PC-9 (cell line): ENCODE measurements at regions of chr12 and their contacts with region 1.

Region 1: DNA sequence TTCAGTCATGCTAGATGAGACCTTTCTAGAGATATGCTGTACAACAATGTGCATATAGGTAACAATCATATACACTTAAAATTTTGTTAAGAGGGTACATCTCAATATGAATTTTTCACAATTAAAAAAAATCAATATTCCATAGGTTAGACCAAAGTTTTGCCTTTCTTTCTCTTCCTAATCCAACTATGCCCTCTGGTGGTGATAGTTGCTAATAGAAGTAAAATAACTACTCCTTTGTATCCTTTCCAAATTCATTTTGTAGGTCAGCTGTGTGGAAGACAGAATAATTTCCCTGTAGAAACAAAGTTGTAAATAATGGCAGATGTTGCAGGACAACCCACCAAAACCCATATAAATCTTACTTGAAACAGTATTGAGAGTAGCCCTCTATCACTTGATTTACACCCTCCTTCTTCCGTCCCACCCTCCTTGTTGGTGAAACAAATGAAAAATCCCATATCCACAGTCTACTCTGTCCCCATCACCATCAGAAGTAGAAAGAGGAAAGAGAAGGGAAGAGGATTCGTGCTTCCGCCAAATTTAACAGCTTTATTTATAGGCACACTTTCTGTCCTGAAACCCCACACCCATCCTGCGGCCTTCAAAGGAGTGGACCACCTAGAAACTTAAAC is 34.2 kb upstream of the KICS2 start:
- DNase-seq: no peak
- H3K4me3 ChIP-seq: no peak overlapping the region
- H3K27ac ChIP-seq: no peak overlapping the region
- H3K4me1 ChIP-seq: no peaks in the 10 kb centered on the region
- H3K27me3 ChIP-seq: no peaks in the 10 kb centered on the region
- CTCF ChIP-seq: peak; percentile 88

Region 2: DNA sequence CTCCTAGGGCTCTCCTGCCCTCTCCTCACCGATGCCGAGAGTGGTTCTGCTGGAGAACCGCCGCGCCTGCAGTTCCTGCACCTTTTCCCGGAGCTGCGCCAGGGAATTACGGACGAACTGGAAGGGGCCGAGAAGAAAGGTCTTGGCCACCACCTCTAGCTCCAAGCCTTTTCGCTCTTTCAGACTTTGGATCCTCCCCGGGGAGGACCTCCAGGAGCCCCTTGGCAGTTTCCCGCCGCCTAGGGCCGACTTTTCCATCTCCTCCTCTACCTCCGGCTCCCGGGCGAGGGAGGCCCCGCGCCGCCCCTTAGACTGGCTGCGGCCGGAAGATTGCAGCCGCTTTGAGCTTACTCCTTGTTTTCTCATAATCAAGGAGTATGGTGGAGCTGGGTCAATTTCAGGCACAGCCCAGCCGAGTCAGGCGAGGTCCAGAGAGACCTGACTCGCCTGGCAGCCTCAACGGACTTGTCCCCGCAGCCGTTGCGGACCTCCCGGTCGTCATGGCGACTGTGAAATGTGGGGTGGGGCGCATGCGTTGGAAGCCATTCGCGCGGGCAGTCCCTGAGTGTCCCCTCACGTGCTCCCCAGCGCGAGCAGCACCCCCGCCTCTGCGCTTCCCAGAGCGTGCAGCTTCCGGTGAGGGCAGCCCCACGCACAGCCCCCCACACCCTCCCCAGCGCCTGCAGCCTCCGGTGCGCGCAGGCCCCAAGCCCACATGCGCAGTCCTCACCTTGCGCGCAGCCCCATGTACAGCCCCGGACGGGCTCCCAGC is 588.1 kb before region 1 on chr12 and contains the start of gene DPY19L2:
- CTCF ChIA-PET with region 1: no interaction called
- POLR2A ChIA-PET with region 1: no interaction called
- intact Hi-C with region 1: loop called (anchors 10 kb)
- DNase-seq: peak in 1 of 2 experiments; percentile 22
- H3K4me3 ChIP-seq: no peak within 1 kb of the TSS
- H3K27ac ChIP-seq: no peak within 1 kb of the TSS
- H3K4me1 ChIP-seq: 0 out of 2 replicates have a peak, but pooled peaks cover 4% of the 10 kb centered on the region
- H3K27me3 ChIP-seq: no peaks in the 10 kb centered on the region
- CTCF ChIP-seq: no peak
- total RNA-seq, gene DPY19L2: not detected in 2 replicates

Region 3: DNA sequence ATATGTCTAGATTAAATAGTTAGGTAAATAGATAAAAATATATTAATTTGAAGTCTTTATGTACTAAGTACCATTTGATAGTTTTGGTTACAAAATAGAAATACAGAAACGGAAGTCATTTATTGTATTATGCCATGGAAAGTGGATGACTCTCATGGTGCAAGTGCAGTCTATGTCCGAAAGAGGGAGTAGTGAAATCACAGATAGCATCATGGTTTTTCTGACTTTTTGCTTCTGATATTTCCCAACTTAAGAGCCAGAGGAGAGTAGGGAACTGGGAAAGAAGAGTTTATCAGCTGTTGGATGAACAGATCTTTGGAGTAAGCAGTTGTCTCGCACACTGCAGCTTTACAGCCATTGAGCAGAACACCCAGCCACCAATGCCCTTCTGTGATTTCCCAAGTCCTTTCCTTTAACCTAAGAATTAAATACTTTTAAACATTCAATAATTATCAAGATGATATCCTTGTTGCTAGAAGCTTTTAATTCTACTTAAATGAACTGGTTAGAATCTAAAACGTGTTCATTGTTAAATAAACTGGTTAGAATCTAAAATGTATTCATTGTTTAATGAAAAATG is 430.2 kb before region 1 on chr12:
- CTCF ChIA-PET with region 1: no interaction called
- POLR2A ChIA-PET with region 1: no interaction called
- intact Hi-C with region 1: loop called (anchors 1 kb)
- DNase-seq: peak in 1 of 2 experiments; percentile 49
- H3K4me3 ChIP-seq: no peak overlapping the region
- H3K27ac ChIP-seq: no peak overlapping the region
- H3K4me1 ChIP-seq: no peaks in the 10 kb centered on the region
- H3K27me3 ChIP-seq: no peaks in the 10 kb centered on the region
- CTCF ChIP-seq: peak; percentile 85

Region 4: GRCh38 chr12:64335772-64336466 is 79.6 kb after region 1 on chr12:
- CTCF ChIA-PET with region 1: no interaction called
- POLR2A ChIA-PET with region 1: no interaction called
- intact Hi-C with region 1: no loop called
- DNase-seq: no peak
- H3K4me3 ChIP-seq: no peak overlapping the region
- H3K27ac ChIP-seq: no peak overlapping the region
- H3K4me1 ChIP-seq: no peaks in the 10 kb centered on the region
- H3K27me3 ChIP-seq: no peaks in the 10 kb centered on the region
- CTCF ChIP-seq: no peak

Region 5: DNA sequence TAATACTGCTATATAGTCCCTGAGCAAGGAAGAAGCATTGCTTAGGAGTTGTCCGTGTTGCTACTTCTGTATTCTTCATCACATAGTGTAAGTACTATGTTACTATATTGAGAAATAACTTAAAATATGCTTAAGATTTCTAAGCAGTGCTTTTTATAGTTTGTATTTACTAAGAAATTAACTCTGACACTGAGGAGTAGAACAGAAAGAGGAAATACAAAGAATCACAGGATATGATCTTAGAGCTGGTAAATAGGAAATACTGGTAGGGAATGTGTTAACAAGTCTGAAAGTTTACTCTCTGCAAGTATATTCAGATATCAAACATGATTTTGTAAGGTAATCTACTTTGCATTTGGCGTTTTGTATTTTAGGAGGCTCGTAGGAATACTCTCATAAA is 163.4 kb after region 1 on chr12:
- CTCF ChIA-PET with region 1: no interaction called
- POLR2A ChIA-PET with region 1: no interaction called
- intact Hi-C with region 1: no loop called
- DNase-seq: no peak
- H3K4me3 ChIP-seq: no peak overlapping the region
- H3K27ac ChIP-seq: no peak overlapping the region
- H3K4me1 ChIP-seq: no peaks in the 10 kb centered on the region
- H3K27me3 ChIP-seq: no peaks in the 10 kb centered on the region
- CTCF ChIP-seq: no peak